ENCODE measurements at regions of chr5 and their contacts with region 1.

Region 1: GRCh38 chr5:134304311-134304710 is 62.7 kb downstream of the CDKL3 start:
- DNase-seq: no peak
- H3K4me3 ChIP-seq: no peak overlapping the region
- H3K27ac ChIP-seq: no peak overlapping the region
- H3K4me1 ChIP-seq: no peaks in the 10 kb centered on the region
- H3K27me3 ChIP-seq: no peaks in the 10 kb centered on the region
- CTCF ChIP-seq: no peak
- POLR2A ChIP-seq: no peak

Region 2: DNA sequence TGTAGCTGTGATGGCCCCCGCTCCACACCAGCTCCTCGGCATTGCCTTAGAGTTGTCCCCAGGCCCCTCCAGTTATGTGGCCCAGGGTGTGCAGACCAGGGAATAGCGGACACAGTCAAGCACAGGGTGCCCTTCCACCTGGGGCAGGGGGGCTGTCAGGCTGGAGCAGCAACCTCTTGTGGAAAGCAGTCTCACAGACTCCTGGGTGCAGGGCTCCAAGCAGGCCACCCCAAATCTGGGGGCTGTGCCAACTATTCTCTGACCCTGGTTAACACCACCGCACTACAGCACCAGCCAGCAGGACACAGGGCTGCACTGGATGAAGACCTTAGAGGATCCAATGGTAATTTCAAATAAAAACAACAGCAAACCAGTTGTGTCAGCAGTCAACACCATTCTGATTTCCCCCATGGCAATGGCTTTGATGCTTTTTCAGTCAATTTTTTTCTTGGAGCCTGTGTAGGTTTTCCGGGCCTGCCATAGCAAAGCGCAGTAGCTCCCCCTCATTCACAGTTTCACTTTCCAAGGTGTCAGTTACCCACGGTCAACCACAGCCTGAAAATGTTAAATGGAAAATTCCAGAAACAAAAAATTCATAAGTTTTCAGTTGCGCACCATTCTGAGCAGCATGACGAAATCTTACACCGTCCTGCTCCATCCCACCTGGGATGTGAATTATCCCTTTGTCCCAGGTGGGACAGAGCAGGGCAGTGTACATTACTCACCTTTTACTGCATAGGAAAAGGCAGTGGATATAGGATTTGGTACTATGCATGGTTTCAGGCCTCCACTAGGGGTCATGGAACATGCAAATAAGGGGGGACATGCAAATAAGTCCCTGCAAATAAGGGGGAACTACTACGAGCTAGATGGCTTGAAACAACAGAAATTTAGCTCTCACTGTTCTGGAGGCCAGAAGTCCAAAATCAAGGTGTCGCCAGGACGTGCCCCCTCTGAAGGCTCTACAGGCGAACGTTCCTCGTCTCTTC is 384.9 kb before region 1 on chr5:
- intact Hi-C with region 1: no loop called
- DNase-seq: no peak
- H3K4me3 ChIP-seq: no peak overlapping the region
- H3K27ac ChIP-seq: no peak overlapping the region
- H3K4me1 ChIP-seq: no peaks in the 10 kb centered on the region
- H3K27me3 ChIP-seq: no peaks in the 10 kb centered on the region
- CTCF ChIP-seq: no peak
- POLR2A ChIP-seq: no peak

Region 3: DNA sequence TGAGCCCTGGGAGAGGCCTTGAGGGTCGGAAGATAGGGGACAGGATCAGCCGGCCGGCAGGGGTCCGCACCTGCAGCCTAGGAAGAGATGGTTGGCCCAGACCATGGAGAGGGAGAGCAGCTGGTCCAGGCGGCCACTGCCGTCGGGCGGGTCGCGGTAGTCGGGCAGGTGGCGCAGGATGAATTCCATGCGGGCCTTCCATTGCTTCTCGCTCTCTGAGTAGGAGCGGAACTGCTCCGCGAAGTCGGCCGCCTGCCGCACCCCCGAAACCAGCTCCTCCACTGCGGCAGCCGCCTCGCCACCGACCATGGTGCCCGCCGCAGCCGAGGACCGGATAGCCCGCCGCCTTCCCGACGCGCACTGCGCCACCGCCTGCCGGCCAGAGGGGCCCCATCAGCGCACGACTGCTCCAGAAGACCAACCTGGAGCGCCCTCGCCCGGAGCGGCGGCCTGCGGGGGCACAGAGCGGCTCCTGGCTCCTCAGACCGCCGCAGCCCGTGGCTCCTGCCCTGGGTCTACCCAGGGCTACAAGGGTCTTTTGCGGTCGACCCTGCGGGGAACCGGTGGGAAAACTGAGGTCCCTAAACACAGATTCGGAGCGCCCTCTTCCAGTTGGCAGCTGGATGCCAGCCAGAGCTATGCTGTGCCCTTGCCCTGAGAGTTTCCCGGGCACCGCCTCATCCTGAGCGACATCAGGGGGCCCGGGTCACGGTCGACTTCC is 107.4 kb after region 1 on chr5 and contains the start of gene CDKN2AIPNL:
- intact Hi-C with region 1: no loop called
- DNase-seq: peak in 1 of 2 donors; percentile 89
- H3K4me3 ChIP-seq: peak within 1 kb of the TSS; percentile 79 to 87
- H3K27ac ChIP-seq: peak within 1 kb of the TSS; percentile 85
- H3K4me1 ChIP-seq: peaks cover 35% of the 10 kb centered on the region
- H3K27me3 ChIP-seq: no peaks in the 10 kb centered on the region
- CTCF ChIP-seq: peak; percentile 24 to 100 (median 80)
- POLR2A ChIP-seq: no peak
- total RNA-seq, gene CDKN2AIPNL: 18.4 TPM

Region 4: DNA sequence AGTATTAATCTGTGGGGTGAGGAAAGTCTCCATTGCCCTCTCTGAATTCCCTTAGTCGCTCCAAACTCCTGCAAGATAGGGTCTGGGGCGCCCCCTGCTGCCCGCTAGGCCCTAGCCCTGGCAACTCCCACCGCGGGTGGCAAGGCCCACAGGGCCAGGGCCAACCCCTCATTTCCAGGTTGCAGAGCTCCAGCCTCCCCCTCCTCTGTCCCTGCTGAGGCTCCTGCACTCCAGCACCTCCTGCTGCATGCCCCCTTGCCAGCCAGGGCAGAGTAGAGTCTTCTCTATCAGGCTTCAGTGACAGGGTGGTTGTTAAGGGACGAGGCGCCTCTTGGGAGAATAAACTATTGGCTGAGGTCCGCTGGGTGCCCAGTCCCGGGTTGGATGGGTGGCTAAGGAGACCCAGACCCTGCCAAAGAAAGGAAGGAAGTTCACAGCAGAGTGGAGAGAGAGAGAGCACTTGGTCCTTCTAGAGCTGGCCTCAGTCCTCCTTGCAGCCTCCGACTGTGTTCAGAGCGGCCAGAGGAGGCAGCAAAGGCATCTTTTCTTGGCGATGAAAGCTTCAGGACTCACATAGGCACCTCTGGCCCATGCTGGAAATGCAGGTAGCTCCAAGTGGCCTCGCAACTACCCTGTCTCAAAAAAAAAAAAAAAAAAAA is 282.7 kb after region 1 on chr5:
- intact Hi-C with region 1: loop called (anchors 2 kb)
- DNase-seq: no peak
- H3K4me3 ChIP-seq: no peak overlapping the region
- H3K27ac ChIP-seq: no peak overlapping the region
- H3K4me1 ChIP-seq: peaks cover 17% of the 10 kb centered on the region
- H3K27me3 ChIP-seq: no peaks in the 10 kb centered on the region
- CTCF ChIP-seq: peak; percentile 59 to 78 (median 71)
- POLR2A ChIP-seq: no peak